PC-3 (cell line): ENCODE measurements at regions of chr2 and their contacts with region 1.

Region 1: GRCh38 chr2:143686585-143687164 is 557.5 kb downstream of the ARHGAP15 start:
- DNase-seq: peak; percentile 74
- ATAC-seq: no peak
- H3K4me3 ChIP-seq: no peak overlapping the region
- H3K27ac ChIP-seq: no peak overlapping the region
- H3K4me1 ChIP-seq: no peaks in the 10 kb centered on the region
- H3K27me3 ChIP-seq: no peaks in the 10 kb centered on the region
- CTCF ChIP-seq: peak; percentile 76

Region 2: DNA sequence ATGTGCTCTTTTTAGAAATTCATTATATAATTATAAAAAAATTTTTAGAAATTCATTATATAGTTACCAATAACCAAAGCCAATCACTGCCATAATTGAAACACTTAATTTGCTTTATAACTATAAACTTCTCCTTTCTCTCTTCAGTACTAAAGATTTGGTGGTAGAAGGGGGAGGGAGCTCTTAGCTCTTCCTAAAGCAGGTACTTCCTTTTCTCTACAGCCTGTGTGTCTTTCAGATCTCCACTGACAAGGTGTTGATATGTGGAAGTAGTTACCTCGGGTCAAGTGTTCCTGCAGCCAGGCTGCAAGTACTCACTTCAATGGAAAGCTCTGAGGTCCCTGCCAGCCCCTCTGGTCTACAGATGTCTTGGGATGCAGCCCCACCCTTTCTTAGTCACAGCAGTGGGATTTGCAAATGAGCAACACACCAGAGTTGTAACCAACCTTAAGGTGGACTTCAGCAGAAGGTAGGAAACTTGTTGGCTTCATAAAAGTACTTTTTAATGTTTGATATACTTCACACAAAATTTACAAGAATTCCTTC is 132.6 kb after region 1 on chr2:
- CTCF ChIA-PET with region 1: no interaction called
- POLR2A ChIA-PET with region 1: no interaction called
- intact Hi-C with region 1: no loop called
- DNase-seq: no peak
- ATAC-seq: no peak
- H3K4me3 ChIP-seq: no peak overlapping the region
- H3K27ac ChIP-seq: no peak overlapping the region
- H3K4me1 ChIP-seq: no peaks in the 10 kb centered on the region
- H3K27me3 ChIP-seq: no peaks in the 10 kb centered on the region
- CTCF ChIP-seq: no peak

Region 3: DNA sequence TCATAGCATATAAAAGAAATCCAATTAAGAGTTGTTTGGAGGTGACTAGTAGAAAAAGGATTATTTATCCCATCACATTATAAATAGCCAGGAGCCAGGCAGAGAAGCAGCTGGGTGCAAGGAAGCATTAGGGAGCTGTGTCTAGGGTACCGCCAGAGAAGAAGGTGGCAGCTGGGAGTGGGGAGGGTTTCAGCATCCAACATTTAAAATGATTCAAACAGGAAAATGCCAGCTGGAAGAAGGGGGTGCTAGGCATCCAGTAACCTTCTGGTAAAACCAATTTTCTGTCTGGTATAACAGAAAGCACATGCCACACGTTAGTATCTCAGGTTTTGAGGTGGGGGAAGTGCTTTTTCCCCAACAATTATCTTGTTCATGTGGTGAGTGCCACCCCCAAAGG is 380.8 kb after region 1 on chr2:
- CTCF ChIA-PET with region 1: no interaction called
- POLR2A ChIA-PET with region 1: no interaction called
- intact Hi-C with region 1: loop called (anchors 10 kb)
- DNase-seq: no peak
- ATAC-seq: no peak
- H3K4me3 ChIP-seq: no peak overlapping the region
- H3K27ac ChIP-seq: no peak overlapping the region
- H3K4me1 ChIP-seq: no peaks in the 10 kb centered on the region
- H3K27me3 ChIP-seq: no peaks in the 10 kb centered on the region
- CTCF ChIP-seq: no peak